Colonic mucosa (tissue), 4 donors: ENCODE measurements at regions of chr6 and their contacts with region 1.

Region 1: DNA sequence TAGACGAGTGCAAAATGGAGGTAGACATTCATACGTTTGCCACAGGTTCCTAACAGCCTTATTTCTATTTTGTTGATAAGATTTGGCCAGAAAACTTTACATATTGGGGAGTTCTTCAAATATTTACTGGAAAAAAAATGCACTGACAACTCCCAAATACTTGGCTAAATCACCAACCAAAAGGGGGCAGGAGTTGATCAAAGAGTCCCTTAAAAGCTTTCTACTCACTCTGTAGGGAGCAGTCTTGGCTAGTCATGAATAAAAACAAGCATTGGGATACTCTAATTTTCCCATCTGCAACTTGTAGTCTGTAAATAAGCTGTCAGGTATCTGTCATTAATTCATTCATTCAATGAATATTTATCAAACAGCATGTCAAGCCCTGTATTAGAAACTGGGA is 18.4 kb downstream of the TENT5A start:
- DNase-seq: no peak
- H3K4me3 ChIP-seq: no peak overlapping the region
- H3K27ac ChIP-seq: no peak overlapping the region
- H3K4me1 ChIP-seq: no peaks in the 10 kb centered on the region
- H3K27me3 ChIP-seq: no peaks in the 10 kb centered on the region
- CTCF ChIP-seq: no peak

Region 2: GRCh38 chr6:81451787-81452186 is 282.3 kb before region 1 on chr6:
- intact Hi-C with region 1: loop called (anchors 10 kb)
- DNase-seq: no peak
- H3K4me3 ChIP-seq: no peak overlapping the region
- H3K27ac ChIP-seq: no peak overlapping the region
- H3K4me1 ChIP-seq: no peaks in the 10 kb centered on the region
- H3K27me3 ChIP-seq: no peaks in the 10 kb centered on the region
- CTCF ChIP-seq: no peak

Region 3: DNA sequence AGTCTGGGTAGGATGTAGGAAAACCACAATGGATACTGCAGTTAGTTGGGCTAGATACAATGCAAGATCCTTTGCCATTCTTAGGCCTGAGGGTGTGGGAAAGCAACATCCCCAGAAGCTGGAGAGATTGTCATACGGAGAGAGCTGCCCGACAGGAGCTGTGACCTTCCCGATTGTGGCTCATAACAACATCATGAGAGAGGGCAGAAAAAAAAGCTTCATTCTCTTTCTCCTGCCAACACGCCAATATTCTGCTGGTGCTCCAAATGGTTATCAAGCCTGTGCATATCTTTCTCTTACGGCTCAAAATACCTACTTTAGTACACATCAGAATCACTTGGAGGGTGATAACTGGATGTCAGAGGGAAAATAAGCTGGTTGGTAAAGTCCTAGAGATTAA is 432.4 kb after region 1 on chr6:
- intact Hi-C with region 1: no loop called
- DNase-seq: no peak
- H3K4me3 ChIP-seq: no peak overlapping the region
- H3K27ac ChIP-seq: no peak overlapping the region
- H3K4me1 ChIP-seq: no peaks in the 10 kb centered on the region
- H3K27me3 ChIP-seq: no peaks in the 10 kb centered on the region
- CTCF ChIP-seq: no peak